Heart left ventricle (tissue), 16 donors: ENCODE measurements at regions of chr16 and their contacts with region 1.

Region 1: DNA sequence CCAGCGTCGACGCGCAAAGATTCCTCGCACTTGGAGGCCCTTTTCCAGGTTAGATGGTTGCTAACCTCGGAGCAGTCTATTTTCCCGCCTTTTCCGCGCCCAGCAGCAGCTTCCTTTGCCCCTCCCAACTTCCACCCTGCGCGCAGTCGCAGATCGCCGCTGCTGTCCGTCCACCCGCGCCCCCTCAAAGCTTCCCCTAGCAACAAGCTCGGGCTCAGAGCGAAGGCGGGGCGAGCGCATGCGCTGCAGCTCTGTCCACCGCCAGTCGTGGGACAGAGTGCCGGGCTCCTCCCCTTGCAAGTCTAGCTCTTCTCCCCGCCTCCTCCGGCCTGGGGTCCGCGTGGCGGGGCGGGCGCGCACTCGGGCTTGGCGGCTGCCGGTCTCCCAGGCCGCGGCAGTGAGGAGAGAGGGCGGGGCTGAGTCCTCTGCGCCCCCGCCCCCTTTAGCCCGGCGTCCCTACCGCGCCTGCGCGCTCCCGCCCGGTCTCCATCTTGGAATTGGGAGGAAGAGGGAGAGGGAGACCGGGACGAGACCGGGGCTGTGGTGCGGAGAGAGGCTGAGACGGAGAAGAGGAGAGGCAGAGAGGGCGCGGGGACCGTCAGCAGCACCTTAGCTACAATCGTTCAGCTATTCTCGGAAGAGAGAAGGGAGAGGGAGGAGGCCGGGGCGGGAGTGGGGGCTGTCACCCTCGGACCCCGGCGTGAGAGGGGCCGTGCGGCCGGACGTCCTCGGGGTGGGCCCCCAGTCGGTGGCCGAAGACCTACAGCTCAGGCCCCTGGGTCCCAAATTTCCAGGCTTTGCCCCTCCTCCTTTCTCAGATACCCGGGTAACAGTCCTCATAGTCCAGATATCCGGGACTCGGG is at the start of gene TAOK2:
- DNase-seq: peak; percentile 99 to 100 (median 99)
- ATAC-seq: peak; percentile 95 to 98 (median 97)
- H3K4me3 ChIP-seq: peak within 1 kb of the TSS; percentile 66 to 98 (median 90)
- H3K27ac ChIP-seq: peak within 1 kb of the TSS; percentile 87 to 99 (median 96)
- H3K4me1 ChIP-seq: peaks cover 0 to 54% (median 37%) of the 10 kb centered on the region in 12 donors
- H3K27me3 ChIP-seq: no peaks in the 10 kb centered on the region
- CTCF ChIP-seq: no peak
- POLR2A ChIP-seq: peak; percentile 65 to 95
- total RNA-seq, gene TAOK2: 29.5 to 47.9 (median 35.1) TPM

Region 2: GRCh38 chr16:28950648-28951409 is 1022.8 kb before region 1 on chr16 and contains the start of gene NFATC2IP:
- intact Hi-C with region 1: loop called in 1 of 10 experiments (anchors 5 kb)
- DNase-seq: peak; percentile 100
- ATAC-seq: peak; percentile 98 to 100 (median 99)
- H3K4me3 ChIP-seq: peak within 1 kb of the TSS; percentile 77 to 100 (median 90)
- H3K27ac ChIP-seq: peak within 1 kb of the TSS; percentile 79 to 94 (median 84)
- H3K4me1 ChIP-seq: peaks cover 0 to 24% (median 12%) of the 10 kb centered on the region in 12 donors
- H3K27me3 ChIP-seq: no peaks in the 10 kb centered on the region
- CTCF ChIP-seq: no peak
- POLR2A ChIP-seq: peak in 1 of 2 donors; percentile 41
- total RNA-seq, gene NFATC2IP: 11.1 to 25.3 (median 19.5) TPM

Region 3: GRCh38 chr16:29720699-29721098 is 252.9 kb before region 1 on chr16:
- intact Hi-C with region 1: no loop called
- DNase-seq: no peak
- ATAC-seq: no peak
- H3K4me3 ChIP-seq: no peak overlapping the region
- H3K27ac ChIP-seq: no peak overlapping the region
- H3K4me1 ChIP-seq: no peaks in the 10 kb centered on the region
- H3K27me3 ChIP-seq: no peaks in the 10 kb centered on the region
- CTCF ChIP-seq: no peak
- POLR2A ChIP-seq: no peak

Region 4: DNA sequence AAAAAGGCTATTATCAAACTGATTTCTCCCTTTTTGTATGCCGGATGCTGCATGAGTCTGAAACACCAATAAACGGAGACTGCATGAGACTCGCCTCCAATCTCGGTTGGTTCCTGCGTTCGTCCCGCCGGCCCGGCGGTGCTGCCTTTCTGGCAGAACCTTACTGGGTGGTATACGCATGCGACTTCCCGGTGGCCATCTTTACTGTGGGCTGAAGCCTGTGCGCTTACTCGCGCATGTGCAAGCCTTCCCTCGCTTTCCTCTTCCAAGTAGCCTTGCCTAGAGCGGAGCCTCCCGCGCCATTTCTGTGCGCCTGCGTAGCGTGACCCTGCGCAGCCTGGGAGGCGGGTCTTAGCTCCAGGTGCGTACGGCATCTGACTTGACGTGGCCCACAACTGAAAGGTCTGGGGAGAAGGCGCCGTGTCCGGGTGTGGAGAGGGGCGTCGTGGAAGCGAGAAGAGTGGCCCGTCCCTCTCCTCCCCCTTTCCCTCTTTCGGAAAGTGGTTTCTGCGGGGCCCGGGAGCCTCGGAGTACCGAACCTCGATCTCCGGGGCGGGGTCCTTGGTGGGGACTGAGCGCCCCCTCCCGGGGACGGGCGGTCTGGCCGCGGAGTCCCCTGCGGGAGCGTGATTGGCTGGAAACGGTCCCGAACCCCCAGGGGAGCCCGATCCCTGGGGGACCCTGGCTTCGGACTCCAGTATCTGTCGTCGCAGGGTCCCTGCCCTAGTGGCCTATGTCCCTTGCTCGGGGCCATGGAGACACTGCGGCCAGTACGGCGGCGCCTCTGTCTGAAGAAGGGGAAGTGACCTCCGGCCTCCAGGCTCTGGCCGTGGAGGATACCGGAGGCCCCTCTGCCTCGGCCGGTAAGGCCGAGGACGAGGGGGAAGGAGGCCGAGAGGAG is 157.6 kb before region 1 on chr16 and contains the start of gene PAGR1:
- intact Hi-C with region 1: loop called in 1 of 10 experiments (anchors 5 kb)
- DNase-seq: peak; percentile 97 to 99 (median 99)
- ATAC-seq: peak; percentile 80 to 89 (median 86)
- H3K4me3 ChIP-seq: peak within 1 kb of the TSS; percentile 45 to 91 (median 74)
- H3K27ac ChIP-seq: peak within 1 kb of the TSS; percentile 84 to 97 (median 93)
- H3K4me1 ChIP-seq: peaks cover 3 to 71% (median 51%) of the 10 kb centered on the region in 12 donors
- H3K27me3 ChIP-seq: peaks cover 0 to 4% (median 0%) of the 10 kb centered on the region in 9 donors
- CTCF ChIP-seq: peak; percentile 82 to 98 (median 91)
- POLR2A ChIP-seq: peak in 1 of 2 donors; percentile 60
- total RNA-seq, gene PAGR1: 10.8 to 23.9 (median 12.6) TPM

Region 5: GRCh38 chr16:29961479-29962343 is 11.9 kb before region 1 on chr16 and contains the start of gene TMEM219:
- intact Hi-C with region 1: loop called in 1 of 10 experiments (anchors 1 kb)
- DNase-seq: peak; percentile 93 to 97 (median 94)
- ATAC-seq: peak; percentile 89 to 99 (median 97)
- H3K4me3 ChIP-seq: peak within 1 kb of the TSS; percentile 59 to 98 (median 76)
- H3K27ac ChIP-seq: peak within 1 kb of the TSS; percentile 76 to 98 (median 96)
- H3K4me1 ChIP-seq: peaks cover 0 to 35% (median 18%) of the 10 kb centered on the region in 12 donors
- H3K27me3 ChIP-seq: no peaks in the 10 kb centered on the region
- CTCF ChIP-seq: peak; percentile 23 to 67 (median 48)
- POLR2A ChIP-seq: peak in 1 of 2 donors; percentile 85
- total RNA-seq, gene TMEM219: 58.9 to 121 (median 69.8) TPM

Region 6: GRCh38 chr16:29995911-29996772 is 22.5 kb after region 1 on chr16 and contains the start of gene INO80E:
- intact Hi-C with region 1: loop called in 6 of 10 experiments (anchors 1 to 2 kb)
- DNase-seq: peak; percentile 99 to 100 (median 99)
- ATAC-seq: peak; percentile 98 to 99 (median 98)
- H3K4me3 ChIP-seq: peak within 1 kb of the TSS; percentile 53 to 95 (median 80)
- H3K27ac ChIP-seq: peak within 1 kb of the TSS; percentile 88 to 100 (median 96)
- H3K4me1 ChIP-seq: peaks cover 0 to 31% (median 18%) of the 10 kb centered on the region in 12 donors
- H3K27me3 ChIP-seq: no peaks in the 10 kb centered on the region
- CTCF ChIP-seq: no peak
- POLR2A ChIP-seq: peak in 1 of 2 donors; percentile 58
- total RNA-seq, gene INO80E: 27.6 to 65.4 (median 32.6) TPM